ENCODE measurements at regions of chr11 and their contacts with region 1.

Region 1: GRCh38 chr11:43404836-43405479 is 46.2 kb downstream of the TTC17 start:
- H3K4me3 Mint-ChIP-seq: no peak overlapping the region
- H3K27ac Mint-ChIP-seq: no peak overlapping the region
- H3K4me1 Mint-ChIP-seq: no peaks in the 10 kb centered on the region
- H3K27me3 Mint-ChIP-seq: no peaks in the 10 kb centered on the region

Region 2: GRCh38 chr11:43327987-43328386 is 77.0 kb before region 1 on chr11:
- intact Hi-C with region 1: loop called (anchors 5 kb)
- H3K4me3 Mint-ChIP-seq: no peak overlapping the region
- H3K27ac Mint-ChIP-seq: no peak overlapping the region
- H3K4me1 Mint-ChIP-seq: no peaks in the 10 kb centered on the region
- H3K27me3 Mint-ChIP-seq: no peaks in the 10 kb centered on the region

Region 3: DNA sequence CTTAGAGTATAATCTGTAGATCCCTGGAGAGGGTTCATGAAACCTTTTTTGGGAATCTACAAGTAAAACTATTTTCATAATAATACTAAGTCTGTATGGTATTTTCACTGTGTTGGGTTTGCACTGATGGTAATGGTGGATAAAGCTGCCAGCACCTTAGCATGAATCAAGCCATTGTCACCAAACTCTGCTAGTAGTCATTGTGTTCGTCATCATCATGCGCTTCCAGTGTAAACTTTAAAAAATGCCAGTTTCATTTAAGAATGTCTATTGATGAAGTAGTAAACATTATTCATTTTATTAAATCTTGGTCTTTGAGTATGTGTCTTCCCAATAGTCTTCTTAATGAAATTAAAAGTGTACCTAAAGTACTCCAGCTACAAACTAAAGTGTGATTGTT is 490.6 kb after region 1 on chr11:
- intact Hi-C with region 1: no loop called
- H3K4me3 Mint-ChIP-seq: no peak overlapping the region
- H3K27ac Mint-ChIP-seq: no peak overlapping the region
- H3K4me1 Mint-ChIP-seq: no peaks in the 10 kb centered on the region
- H3K27me3 Mint-ChIP-seq: no peaks in the 10 kb centered on the region